Lower leg skin (tissue), 4 donors: ENCODE measurements at regions of chr6 and their contacts with region 1.

Region 1: GRCh38 chr6:126919947-126920346 is 198.5 kb upstream of the RSPO3 start:
- DNase-seq: no peak
- H3K4me3 ChIP-seq: no peak overlapping the region
- CTCF ChIP-seq: no peak
- POLR2A ChIP-seq: no peak

Region 2: GRCh38 chr6:126444659-126445273 is 475.2 kb before region 1 on chr6:
- intact Hi-C with region 1: no loop called
- DNase-seq: no peak
- H3K4me3 ChIP-seq: no peak overlapping the region
- CTCF ChIP-seq: no peak
- POLR2A ChIP-seq: no peak

Region 3: DNA sequence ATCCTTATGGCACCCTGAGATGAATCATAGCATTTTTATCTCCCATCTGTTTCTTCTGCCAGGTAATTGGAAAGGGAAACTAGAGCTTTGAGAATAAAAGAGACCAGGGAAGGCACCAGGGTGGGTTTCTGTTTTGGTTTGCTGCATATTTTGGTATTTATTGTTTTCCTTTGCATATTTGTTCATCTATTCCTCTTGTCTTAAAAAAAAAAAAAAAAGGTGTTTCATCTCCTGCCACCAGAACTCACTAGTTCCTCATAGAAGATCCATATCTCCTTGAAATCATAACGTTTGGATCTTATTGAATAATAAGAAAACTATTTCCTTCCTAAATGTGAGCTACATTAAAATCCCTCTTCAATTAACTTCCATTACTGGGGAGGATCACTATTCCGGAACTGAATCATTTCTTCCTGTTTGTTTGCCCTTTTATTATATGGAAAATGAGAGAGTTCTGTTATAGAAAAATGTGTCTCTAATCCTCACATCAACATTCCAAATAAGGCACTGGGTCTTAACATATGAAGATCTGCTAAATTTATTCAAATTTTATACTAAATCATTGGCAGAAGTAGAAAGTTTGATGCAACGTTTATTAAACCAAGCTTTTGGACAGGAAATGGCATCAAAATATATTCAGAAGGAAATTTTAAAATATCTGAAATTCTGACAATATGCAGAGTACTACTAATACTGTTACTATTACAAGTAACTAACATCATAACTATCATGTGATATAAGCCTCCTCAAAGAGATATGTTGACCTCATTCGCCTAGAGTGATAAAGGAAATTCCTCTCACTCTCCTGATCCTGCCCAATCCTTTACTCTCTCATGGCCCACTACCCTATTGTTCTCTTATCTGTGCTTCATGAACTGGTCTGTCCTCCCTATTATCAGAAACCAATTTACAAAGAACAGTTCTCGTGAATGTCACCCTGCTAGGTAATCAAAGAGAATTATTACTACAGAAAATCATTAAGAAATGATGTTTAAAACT is 30.9 kb before region 1 on chr6:
- intact Hi-C with region 1: loop called (anchors 1 kb)
- DNase-seq: no peak
- H3K4me3 ChIP-seq: no peak overlapping the region
- CTCF ChIP-seq: no peak
- POLR2A ChIP-seq: no peak

Region 4: DNA sequence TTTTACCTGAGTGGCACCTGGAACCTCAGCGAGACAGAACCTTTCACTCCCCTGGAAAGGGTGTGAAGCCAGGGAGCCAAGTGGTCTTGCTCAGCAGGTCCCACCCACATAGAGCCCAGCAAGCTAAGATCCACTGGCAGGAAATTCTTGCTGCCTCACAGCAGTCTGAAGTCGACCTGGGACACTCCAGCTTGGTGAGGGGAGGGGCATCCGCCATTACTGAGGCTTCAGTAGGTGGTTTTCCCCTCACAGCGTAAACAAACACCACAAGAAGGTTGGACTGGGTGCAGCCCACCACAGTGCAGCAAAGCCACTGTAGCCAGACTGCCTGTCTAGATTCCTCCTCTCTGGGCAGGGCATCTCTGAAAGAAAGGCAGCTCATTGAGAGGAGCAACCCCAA is 63.8 kb after region 1 on chr6:
- intact Hi-C with region 1: no loop called
- DNase-seq: no peak
- H3K4me3 ChIP-seq: no peak overlapping the region
- CTCF ChIP-seq: no peak
- POLR2A ChIP-seq: no peak